ENCODE measurements at regions of chr15 and their contacts with region 1.

Region 1: DNA sequence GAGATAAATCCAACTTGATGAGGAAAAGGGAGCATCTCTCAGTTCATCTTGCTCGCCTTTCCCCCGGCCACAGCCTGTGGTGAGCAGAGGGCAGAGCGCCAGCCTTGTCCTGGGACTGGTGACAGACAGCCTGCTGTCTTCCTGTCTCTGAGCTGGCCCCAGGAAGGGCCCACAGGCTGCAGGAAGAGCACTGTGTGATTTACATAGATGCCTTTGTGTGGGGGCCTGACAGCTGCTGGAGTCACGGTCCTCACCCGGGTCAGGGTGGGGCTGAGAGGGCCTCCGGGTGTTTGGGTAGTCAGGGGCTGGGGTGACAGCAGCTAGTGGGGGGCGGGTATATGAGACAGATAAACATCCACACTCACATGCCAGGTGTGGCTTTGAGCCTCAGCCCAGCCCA is 29.3 kb downstream of the PLA2G4D start:
- DNase-seq: no peak
- ATAC-seq: no peak
- H3K4me3 ChIP-seq: no peak overlapping the region
- H3K27ac ChIP-seq: no peak overlapping the region
- H3K4me1 ChIP-seq: peaks cover 20% of the 10 kb centered on the region
- H3K27me3 ChIP-seq: no peaks in the 10 kb centered on the region
- CTCF ChIP-seq: no peak
- POLR2A ChIP-seq: no peak

Region 2: DNA sequence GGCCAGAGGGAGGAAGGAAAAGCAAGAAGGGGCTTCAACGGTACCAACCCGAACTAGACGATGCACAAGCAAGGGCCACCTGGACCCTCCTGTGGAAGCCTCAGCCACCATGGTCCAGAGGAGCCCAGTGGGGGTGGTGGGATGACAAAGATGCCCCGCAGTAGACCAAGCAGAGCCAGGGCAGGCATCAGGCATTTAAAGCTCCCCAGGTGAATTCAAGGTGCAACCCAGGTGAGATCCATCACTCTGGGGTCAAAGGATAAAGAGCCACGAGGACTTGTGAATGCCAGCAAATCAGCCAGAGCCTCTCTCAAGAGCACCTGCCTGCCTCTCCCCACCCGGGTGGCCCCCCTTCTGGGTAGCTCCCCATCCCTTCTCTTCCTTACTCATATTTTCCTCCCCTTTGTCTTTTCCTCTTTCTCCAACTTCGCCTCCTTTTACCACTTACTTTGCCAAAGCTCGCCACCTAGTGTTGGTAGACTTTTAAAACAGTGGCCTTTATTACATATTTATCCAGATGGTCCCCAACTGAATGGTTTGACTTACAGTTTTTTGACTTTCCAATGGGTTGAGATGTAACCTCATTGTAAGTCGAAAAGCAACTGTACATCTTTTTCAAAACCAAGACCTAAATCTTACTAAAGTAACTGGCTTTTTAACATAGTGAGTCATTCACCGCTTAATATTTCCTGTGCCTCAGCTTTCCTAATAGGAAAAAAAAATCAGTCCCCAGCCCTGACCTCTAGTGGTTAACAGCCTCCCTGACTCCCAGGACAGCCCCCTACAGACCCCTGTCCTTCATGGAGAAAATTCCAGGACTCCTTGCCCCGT is 72.6 kb after region 1 on chr15:
- intact Hi-C with region 1: loop called (anchors 5 kb)
- DNase-seq: peak in 2 of 4 donors; percentile 33 to 50
- ATAC-seq: peak; percentile 38
- H3K4me3 ChIP-seq: no peak overlapping the region
- H3K27ac ChIP-seq: no peak overlapping the region
- H3K4me1 ChIP-seq: no peaks in the 10 kb centered on the region
- H3K27me3 ChIP-seq: no peaks in the 10 kb centered on the region
- CTCF ChIP-seq: peak; percentile 33 to 69 (median 63)
- POLR2A ChIP-seq: no peak